ENCODE measurements at regions of chr19 and their contacts with region 1.

Region 1: DNA sequence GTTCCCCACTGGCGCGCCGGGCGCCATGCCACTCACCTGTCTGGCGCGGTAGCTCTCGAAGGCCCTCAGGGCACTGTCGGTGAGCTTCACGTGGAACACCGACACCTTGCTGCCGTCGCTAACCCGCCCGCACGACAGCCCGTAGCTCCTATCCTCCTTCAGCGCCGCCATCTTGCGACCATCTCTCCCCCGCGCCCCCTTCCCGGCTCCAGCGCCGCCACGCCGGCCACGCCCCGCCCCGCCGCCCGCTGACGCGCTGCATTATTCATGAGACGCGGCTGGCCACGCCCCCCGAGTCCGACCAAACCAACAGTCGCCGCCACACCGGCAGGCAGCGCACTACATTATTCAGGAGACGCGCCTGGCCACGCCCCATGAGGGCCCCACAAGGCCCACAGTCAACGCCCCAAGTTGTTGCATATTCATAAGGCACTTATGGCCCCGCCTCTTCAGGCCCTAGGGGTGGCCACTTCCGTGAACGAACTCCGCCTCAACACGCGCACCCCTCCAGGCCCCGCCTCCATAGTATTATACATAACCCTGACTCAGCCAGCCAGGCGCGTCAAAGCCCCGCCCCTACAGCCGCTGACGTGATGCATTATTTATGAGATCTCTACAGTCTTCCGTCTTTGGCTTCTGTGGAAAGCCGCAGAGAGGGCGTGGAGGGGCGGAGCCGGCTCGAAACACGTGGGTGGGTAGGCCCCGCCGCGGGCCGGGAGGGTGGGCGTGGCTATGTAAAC is at the start of gene ELL:
- DNase-seq: peak; percentile 100

Region 2: GRCh38 chr19:18469069-18469846 is 52.8 kb before region 1 on chr19:
- intact Hi-C with region 1: loop called (anchors 5 kb)
- DNase-seq: peak in 6 of 10 donors; percentile 45 to 93 (median 64)

Region 3: DNA sequence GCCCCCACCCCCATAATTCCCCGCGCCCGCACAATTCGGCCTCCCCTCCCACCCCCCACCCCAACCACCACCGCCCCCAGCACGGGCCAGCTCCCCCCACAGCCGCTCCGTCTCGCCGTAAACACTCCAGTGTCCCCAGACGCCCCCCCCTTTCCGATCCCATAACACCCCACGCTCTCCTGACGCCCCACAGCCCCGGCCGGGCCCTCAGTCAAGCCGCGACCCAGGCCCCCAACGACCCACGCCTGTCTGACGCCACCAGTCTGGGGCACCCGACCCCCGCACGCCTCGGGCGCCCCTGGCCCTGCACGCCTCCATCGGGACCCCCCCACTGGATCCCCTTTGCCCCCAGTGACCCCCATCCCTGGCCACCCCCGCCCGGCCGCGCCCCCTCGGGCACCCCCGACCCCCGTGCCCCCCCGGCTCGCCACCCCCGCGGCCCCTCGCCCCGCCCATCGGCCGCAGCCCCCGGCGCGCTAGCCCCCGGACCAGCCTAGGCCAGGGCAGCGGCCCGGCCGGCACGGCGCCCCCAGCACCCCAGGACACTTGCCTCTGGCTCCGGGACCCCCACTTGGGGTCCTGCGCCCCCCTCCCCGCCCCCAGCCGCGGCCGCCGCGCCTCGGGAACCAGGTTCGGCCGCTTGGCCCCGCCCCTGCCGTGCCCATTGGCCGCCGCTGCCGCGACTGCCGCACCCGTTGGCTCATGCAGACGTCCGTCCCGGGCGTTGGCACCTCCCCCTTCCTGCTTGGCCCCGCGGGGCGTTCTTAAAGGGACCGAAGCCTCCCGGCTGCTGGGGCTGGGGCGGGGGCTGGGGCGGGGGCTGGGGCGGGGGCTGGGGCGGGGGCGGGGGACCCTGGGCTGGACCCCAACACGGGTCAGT is 21.1 kb after region 1 on chr19 and contains the start of gene FKBP8:
- intact Hi-C with region 1: loop called (anchors 2 kb)
- DNase-seq: peak; percentile 92 to 99 (median 96)

Region 4: GRCh38 chr19:18557474-18558201 is 35.6 kb after region 1 on chr19 and contains the start of gene KXD1:
- intact Hi-C with region 1: loop called (anchors 1 kb)
- DNase-seq: peak; percentile 94 to 99 (median 97)

Region 5: DNA sequence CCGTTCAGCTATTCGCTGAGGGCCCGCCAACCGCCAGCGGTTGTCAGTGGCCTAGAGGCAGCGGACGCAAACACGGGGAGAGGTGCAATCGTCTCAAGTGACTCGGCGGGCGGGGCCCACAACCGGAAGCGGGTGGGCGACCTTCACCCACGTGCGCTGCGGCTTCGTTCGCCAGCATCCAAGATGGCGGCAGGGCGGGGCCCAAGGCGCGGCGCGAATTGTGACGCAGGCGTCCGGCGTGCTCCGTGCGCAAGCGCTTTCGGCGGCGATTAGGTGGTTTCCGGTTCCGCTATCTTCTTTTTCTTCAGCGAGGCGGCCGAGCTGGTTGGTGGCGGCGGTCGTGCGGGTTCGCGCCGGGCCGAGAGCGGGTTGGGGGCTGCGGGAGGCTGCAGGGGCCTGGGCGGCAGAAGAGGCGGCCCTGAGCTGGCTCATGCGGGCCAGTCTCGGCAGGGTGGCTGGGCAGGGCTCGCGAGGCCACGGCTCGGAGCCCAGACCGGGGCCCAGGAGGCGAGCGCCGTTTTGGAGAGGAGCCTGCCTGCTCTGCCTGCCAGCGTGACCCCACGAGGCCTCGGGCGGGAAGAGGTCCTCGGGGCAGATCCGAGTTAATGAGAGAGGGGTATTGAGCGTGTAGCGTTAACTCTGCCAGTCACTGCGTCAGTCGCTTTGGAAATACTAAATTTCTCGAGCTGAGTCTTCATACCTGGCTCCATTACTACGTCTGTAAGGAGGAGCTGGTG is 49.7 kb after region 1 on chr19 and contains the start of gene UBA52:
- intact Hi-C with region 1: loop called (anchors 2 kb)
- DNase-seq: peak; percentile 95 to 99 (median 96)